ENCODE measurements at regions of chr11 and their contacts with region 1.

Region 1: GRCh38 chr11:14075118-14076078 is 112.9 kb downstream of the SPON1 start:
- DNase-seq: peak; percentile 64 to 84 (median 71)
- H3K4me3 ChIP-seq: no peak overlapping the region
- H3K4me3 Mint-ChIP-seq: peak overlapping the region; percentile 55 to 84 (median 75)
- H3K27ac ChIP-seq: peak overlapping the region; percentile 33
- H3K27ac Mint-ChIP-seq: peak overlapping the region; percentile 76 to 92 (median 83)
- H3K4me1 ChIP-seq: peaks cover 60% of the 10 kb centered on the region
- H3K4me1 Mint-ChIP-seq: peaks cover 40 to 61% (median 52%) of the 10 kb centered on the region in 4 donors
- H3K27me3 ChIP-seq: no peaks in the 10 kb centered on the region
- H3K27me3 Mint-ChIP-seq: peaks cover 0 to 2% of the 10 kb centered on the region in 2 donors

Region 2: GRCh38 chr11:14119357-14119756 is 44.0 kb after region 1 on chr11:
- CTCF ChIA-PET with region 1: no interaction called
- POLR2A ChIA-PET with region 1: no interaction called
- intact Hi-C with region 1: loop called (anchors 5 kb)
- DNase-seq: no peak
- H3K4me3 ChIP-seq: no peak overlapping the region
- H3K4me3 Mint-ChIP-seq: no peak overlapping the region
- H3K27ac ChIP-seq: no peak overlapping the region
- H3K27ac Mint-ChIP-seq: no peak overlapping the region
- H3K4me1 ChIP-seq: no peaks in the 10 kb centered on the region
- H3K4me1 Mint-ChIP-seq: peaks cover 3 to 7% (median 5%) of the 10 kb centered on the region in 4 donors
- H3K27me3 ChIP-seq: no peaks in the 10 kb centered on the region
- H3K27me3 Mint-ChIP-seq: peaks cover 0 to 1% of the 10 kb centered on the region in 2 donors